ENCODE measurements at regions of chr1 and their contacts with region 1.

Region 1: GRCh38 chr1:22025368-22026155 is 24.1 kb downstream of the CELA3A start:
- DNase-seq: peak; percentile 79
- ATAC-seq: peak; percentile 76
- H3K4me3 Mint-ChIP-seq: peak overlapping the region; percentile 96
- H3K27ac Mint-ChIP-seq: peak overlapping the region; percentile 99
- H3K4me1 Mint-ChIP-seq: peaks cover 54% of the 10 kb centered on the region
- H3K27me3 Mint-ChIP-seq: no peaks in the 10 kb centered on the region
- CTCF ChIP-seq: no peak

Region 2: GRCh38 chr1:21703318-21703963 is 322.1 kb before region 1 on chr1:
- CTCF ChIA-PET with region 1: no interaction called
- POLR2A ChIA-PET with region 1: no interaction called
- intact Hi-C with region 1: loop called (anchors 10 kb)
- DNase-seq: no peak
- ATAC-seq: no peak
- H3K4me3 Mint-ChIP-seq: no peak overlapping the region
- H3K27ac Mint-ChIP-seq: no peak overlapping the region
- H3K4me1 Mint-ChIP-seq: peaks cover 11% of the 10 kb centered on the region
- H3K27me3 Mint-ChIP-seq: no peaks in the 10 kb centered on the region
- CTCF ChIP-seq: no peak

Region 3: GRCh38 chr1:21782868-21783678 is 242.5 kb before region 1 on chr1 and contains the start of gene USP48:
- CTCF ChIA-PET with region 1: no interaction called
- POLR2A ChIA-PET with region 1: interaction called, 27 read pairs
- intact Hi-C with region 1: loop called (anchors 1 kb)
- DNase-seq: peak; percentile 97
- ATAC-seq: peak; percentile 78
- H3K4me3 Mint-ChIP-seq: peak within 1 kb of the TSS; percentile 90
- H3K27ac Mint-ChIP-seq: peak within 1 kb of the TSS; percentile 100
- H3K4me1 Mint-ChIP-seq: peaks cover 30% of the 10 kb centered on the region
- H3K27me3 Mint-ChIP-seq: no peaks in the 10 kb centered on the region
- CTCF ChIP-seq: no peak
- total RNA-seq, gene USP48: 86.3 and 97.3 TPM in 2 replicates

Region 4: DNA sequence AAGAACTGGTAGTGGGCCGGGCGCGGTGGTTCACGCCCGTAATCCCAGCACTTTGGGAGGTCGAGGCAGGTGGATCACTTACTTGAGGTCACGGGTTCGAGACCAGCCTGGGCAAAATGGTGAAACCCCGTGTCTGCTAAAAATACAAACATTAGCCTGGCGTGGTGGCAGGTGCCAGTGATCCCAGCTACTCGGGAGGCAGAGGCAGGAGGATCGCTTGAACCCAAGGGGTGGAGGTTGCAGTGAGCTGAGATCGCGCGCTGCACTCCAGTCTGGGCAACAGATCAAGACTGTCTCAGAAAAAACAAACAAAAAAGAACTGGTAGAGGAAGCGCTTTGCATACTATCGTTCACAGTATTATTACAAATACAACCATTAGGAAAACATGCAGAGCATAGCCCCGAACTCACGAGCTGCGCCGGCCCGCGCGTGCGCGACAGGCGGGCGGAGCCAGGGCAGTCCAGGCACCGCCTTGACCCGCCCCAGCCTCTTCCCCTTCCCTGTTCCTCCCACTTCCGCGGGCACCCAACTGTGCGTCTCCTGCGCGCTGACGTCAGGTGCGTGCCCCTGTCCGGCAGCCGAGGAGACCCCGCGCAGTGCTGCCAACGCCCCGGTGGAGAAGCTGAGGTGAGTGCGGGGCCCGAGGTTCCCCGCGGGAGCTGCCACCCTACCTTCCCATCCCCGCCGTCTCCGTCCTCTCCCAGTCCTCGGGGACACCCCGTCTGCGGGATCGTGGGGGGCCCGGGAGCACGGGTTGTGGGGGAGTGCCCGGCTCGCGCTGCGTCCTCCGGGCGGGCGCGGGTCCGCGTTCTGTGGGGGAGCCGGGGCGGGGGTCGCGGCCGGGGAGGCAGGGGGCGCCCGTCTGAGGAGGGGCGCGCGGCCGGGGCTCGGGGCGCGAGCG is 26.8 kb after region 1 on chr1 and contains the start of gene CDC42:
- CTCF ChIA-PET with region 1: interaction called, 16 read pairs
- POLR2A ChIA-PET with region 1: interaction called, 659 read pairs
- intact Hi-C with region 1: loop called (anchors 1 kb)
- DNase-seq: peak; percentile 98
- ATAC-seq: peak; percentile 87
- H3K4me3 Mint-ChIP-seq: peak within 1 kb of the TSS; percentile 95
- H3K27ac Mint-ChIP-seq: peak within 1 kb of the TSS; percentile 91
- H3K4me1 Mint-ChIP-seq: peaks cover 58% of the 10 kb centered on the region
- H3K27me3 Mint-ChIP-seq: no peaks in the 10 kb centered on the region
- CTCF ChIP-seq: no peak
- total RNA-seq, gene CDC42: 310 and 324 TPM in 2 replicates

Region 5: DNA sequence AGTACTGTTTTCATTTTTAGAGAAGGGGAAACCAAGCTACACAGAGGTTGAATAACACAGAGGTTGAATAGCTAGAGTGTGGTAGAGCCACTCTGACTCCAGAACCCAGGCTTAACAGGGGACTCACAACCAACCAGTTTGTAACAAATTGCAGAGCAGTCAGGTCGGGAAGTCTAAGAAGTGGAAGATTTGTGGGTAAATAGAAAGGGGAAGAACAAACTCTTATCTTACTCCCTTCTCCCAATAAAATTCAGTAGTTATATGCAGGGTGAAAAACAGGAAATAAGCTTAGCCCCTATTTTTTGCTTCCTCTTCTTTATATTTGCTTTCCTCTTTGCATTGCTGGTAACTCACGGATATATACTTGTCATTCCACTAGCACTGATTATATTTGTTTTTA is 50.2 kb after region 1 on chr1:
- CTCF ChIA-PET with region 1: interaction called, 5 read pairs
- POLR2A ChIA-PET with region 1: interaction called, 17 read pairs
- intact Hi-C with region 1: loop called (anchors 1 kb)
- DNase-seq: no peak
- ATAC-seq: peak; percentile 43
- H3K4me3 Mint-ChIP-seq: peak overlapping the region; percentile 50
- H3K27ac Mint-ChIP-seq: peak overlapping the region; percentile 57
- H3K4me1 Mint-ChIP-seq: peaks cover 85% of the 10 kb centered on the region
- H3K27me3 Mint-ChIP-seq: no peaks in the 10 kb centered on the region
- CTCF ChIP-seq: no peak

Region 6: GRCh38 chr1:22451702-22452474 is 426.3 kb after region 1 on chr1 and contains the start of gene ZBTB40:
- CTCF ChIA-PET with region 1: no interaction called
- POLR2A ChIA-PET with region 1: interaction called, 7 read pairs
- intact Hi-C with region 1: loop called (anchors 5 kb)
- DNase-seq: peak; percentile 92
- ATAC-seq: peak; percentile 94
- H3K4me3 Mint-ChIP-seq: peak within 1 kb of the TSS; percentile 90
- H3K27ac Mint-ChIP-seq: peak within 1 kb of the TSS; percentile 82
- H3K4me1 Mint-ChIP-seq: peaks cover 34% of the 10 kb centered on the region
- H3K27me3 Mint-ChIP-seq: no peaks in the 10 kb centered on the region
- CTCF ChIP-seq: no peak
- total RNA-seq, gene ZBTB40: 32.5 and 36.2 TPM in 2 replicates

Measured in activated B cell treated with CpG ODN at 0.5 μM for 24 hours (primary cell).